ENCODE measurements at regions of chr3 and their contacts with region 1.

Region 1: GRCh38 chr3:50292159-50293078 is at the start of gene IFRD2:
- DNase-seq: peak in 8 of 9 experiments; percentile 92 to 98 (median 94)
- ATAC-seq: peak; percentile 98
- H3K4me3 ChIP-seq: peak within 1 kb of the TSS; percentile 87 to 88
- H3K4me3 Mint-ChIP-seq: peak within 1 kb of the TSS; percentile 89
- H3K27ac ChIP-seq: peak within 1 kb of the TSS; percentile 68 to 81
- H3K27ac Mint-ChIP-seq: peak within 1 kb of the TSS; percentile 96
- H3K4me1 ChIP-seq: peaks cover 13% of the 10 kb centered on the region
- H3K4me1 Mint-ChIP-seq: peaks cover 18% of the 10 kb centered on the region
- H3K27me3 ChIP-seq: no peaks in the 10 kb centered on the region
- H3K27me3 Mint-ChIP-seq: no peaks in the 10 kb centered on the region
- CTCF ChIP-seq: no peak
- total RNA-seq, gene IFRD2: 42.4 to 42.9 TPM

Region 2: DNA sequence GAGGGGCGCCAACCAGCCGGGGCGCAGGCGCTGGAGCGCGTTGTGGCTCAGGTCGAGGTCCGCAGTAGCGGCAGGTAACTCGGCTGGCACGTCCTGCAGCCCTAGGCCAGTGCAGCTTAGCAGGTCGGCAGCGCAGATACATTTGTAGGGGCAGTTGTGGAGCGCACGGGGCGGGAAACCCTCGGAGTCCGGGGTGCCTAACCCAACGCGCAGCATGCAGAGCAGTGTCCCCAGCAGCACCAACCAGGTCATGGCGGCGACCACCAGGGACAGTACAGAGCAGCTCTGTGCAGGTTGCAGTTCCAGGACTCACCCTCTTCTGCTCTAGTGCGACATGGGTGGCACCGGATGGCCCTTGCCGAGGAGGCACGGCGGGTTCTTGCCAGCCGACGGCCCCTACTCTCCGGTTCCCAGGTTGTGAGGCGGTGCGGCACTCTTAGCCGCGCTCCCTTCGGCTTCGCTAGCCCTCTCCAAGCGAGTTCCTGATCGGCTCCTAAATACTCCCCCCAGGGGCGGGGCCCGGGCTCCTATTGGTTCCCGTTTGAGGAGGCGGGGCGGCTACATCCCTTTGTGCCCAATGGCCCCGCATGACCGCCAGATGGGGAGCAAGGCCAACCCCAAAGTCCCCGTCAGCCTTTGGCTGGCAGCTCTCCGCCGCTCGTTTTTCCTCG is 573.1 kb before region 1 on chr3 and contains the start of gene AMIGO3:
- CTCF ChIA-PET with region 1: no interaction called
- POLR2A ChIA-PET with region 1: no interaction called
- intact Hi-C with region 1: no loop called
- DNase-seq: peak; percentile 78 to 93 (median 91)
- ATAC-seq: peak; percentile 78
- H3K4me3 ChIP-seq: peak within 1 kb of the TSS; percentile 76 to 94
- H3K4me3 Mint-ChIP-seq: peak within 1 kb of the TSS; percentile 92
- H3K27ac ChIP-seq: peak within 1 kb of the TSS; percentile 68 to 85
- H3K27ac Mint-ChIP-seq: peak within 1 kb of the TSS; percentile 92
- H3K4me1 ChIP-seq: peaks cover 25% of the 10 kb centered on the region
- H3K4me1 Mint-ChIP-seq: peaks cover 37% of the 10 kb centered on the region
- H3K27me3 ChIP-seq: no peaks in the 10 kb centered on the region
- H3K27me3 Mint-ChIP-seq: no peaks in the 10 kb centered on the region
- CTCF ChIP-seq: peak; percentile 94
- total RNA-seq, gene AMIGO3: 1.5 to 3.5 TPM

Region 3: GRCh38 chr3:49939858-49940666 is 352.4 kb before region 1 on chr3 and contains the start of gene RBM6:
- CTCF ChIA-PET with region 1: no interaction called
- POLR2A ChIA-PET with region 1: interaction called, 5 read pairs
- intact Hi-C with region 1: loop called (anchors 1 to 2 kb)
- DNase-seq: peak; percentile 82 to 97 (median 93)
- ATAC-seq: peak; percentile 98
- H3K4me3 ChIP-seq: peak within 1 kb of the TSS; percentile 78 to 98
- H3K4me3 Mint-ChIP-seq: peak within 1 kb of the TSS; percentile 99
- H3K27ac ChIP-seq: peak within 1 kb of the TSS; percentile 67 to 99
- H3K27ac Mint-ChIP-seq: peak within 1 kb of the TSS; percentile 98
- H3K4me1 ChIP-seq: peaks cover 15% of the 10 kb centered on the region
- H3K4me1 Mint-ChIP-seq: peaks cover 30% of the 10 kb centered on the region
- H3K27me3 ChIP-seq: no peaks in the 10 kb centered on the region
- H3K27me3 Mint-ChIP-seq: no peaks in the 10 kb centered on the region
- CTCF ChIP-seq: no peak
- total RNA-seq, gene RBM6: 92.1 to 95.0 TPM

Region 4: GRCh38 chr3:50112462-50112861 is 180.0 kb before region 1 on chr3:
- CTCF ChIA-PET with region 1: no interaction called
- POLR2A ChIA-PET with region 1: no interaction called
- intact Hi-C with region 1: no loop called
- DNase-seq: no peak
- ATAC-seq: no peak
- H3K4me3 ChIP-seq: no peak overlapping the region
- H3K4me3 Mint-ChIP-seq: no peak overlapping the region
- H3K27ac ChIP-seq: no peak overlapping the region
- H3K27ac Mint-ChIP-seq: no peak overlapping the region
- H3K4me1 ChIP-seq: no peaks in the 10 kb centered on the region
- H3K4me1 Mint-ChIP-seq: peaks cover 6% of the 10 kb centered on the region
- H3K27me3 ChIP-seq: no peaks in the 10 kb centered on the region
- H3K27me3 Mint-ChIP-seq: no peaks in the 10 kb centered on the region
- CTCF ChIP-seq: no peak

Region 5: GRCh38 chr3:50227390-50228183 is 64.8 kb before region 1 on chr3:
- CTCF ChIA-PET with region 1: interaction called, 3 read pairs
- POLR2A ChIA-PET with region 1: no interaction called
- intact Hi-C with region 1: loop called in 1 of 2 experiments (anchors 1 kb)
- DNase-seq: peak; percentile 76 to 95 (median 91)
- ATAC-seq: peak; percentile 81
- H3K4me3 ChIP-seq: peak overlapping the region; percentile 69 to 78
- H3K4me3 Mint-ChIP-seq: peak overlapping the region; percentile 91
- H3K27ac ChIP-seq: peak overlapping the region; percentile 56 to 66
- H3K27ac Mint-ChIP-seq: peak overlapping the region; percentile 91
- H3K4me1 ChIP-seq: peaks cover 17% of the 10 kb centered on the region
- H3K4me1 Mint-ChIP-seq: peaks cover 22% of the 10 kb centered on the region
- H3K27me3 ChIP-seq: no peaks in the 10 kb centered on the region
- H3K27me3 Mint-ChIP-seq: no peaks in the 10 kb centered on the region
- CTCF ChIP-seq: peak; percentile 73

Region 6: DNA sequence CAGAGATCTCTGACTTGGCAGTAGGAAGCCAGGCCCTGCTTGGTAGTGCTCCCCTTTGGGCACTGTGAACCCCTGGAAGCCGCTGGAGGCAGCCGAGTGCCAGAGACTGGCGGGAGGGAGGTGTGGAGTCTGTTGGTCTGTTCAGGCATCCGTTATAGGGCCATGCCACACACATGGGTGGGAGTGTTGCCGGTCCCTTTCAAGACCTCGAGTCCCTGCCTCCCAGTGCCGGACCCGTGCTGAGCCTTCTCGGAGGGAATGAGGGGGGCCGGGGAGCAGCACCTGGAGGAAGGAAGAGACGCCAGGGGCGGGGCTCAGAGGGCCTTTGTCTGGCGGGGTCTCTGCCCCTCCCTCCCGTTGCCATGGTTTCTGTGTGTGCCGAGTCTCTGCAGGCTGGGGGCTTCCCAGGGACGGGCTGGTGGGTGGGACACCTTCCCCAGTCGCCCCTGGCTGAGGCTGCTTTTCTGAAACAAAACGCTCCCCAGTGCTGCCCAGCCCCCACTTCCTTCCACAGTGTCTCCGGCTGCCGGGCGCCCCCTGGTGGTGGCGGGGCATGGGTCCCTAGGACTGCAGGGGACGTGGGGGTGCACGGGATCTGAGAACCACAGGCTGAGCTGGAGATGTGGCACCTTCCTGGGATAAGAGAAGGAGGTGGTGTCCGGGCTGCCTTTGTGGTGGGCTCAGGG is 46.4 kb before region 1 on chr3:
- CTCF ChIA-PET with region 1: interaction called, 6 read pairs
- POLR2A ChIA-PET with region 1: interaction called, 4 read pairs
- intact Hi-C with region 1: loop called in 1 of 2 experiments (anchors 1 kb)
- DNase-seq: peak; percentile 90 to 99 (median 95)
- ATAC-seq: peak; percentile 81
- H3K4me3 ChIP-seq: peak overlapping the region; percentile 40 to 55
- H3K4me3 Mint-ChIP-seq: peak overlapping the region; percentile 75
- H3K27ac ChIP-seq: peak overlapping the region; percentile 32 to 88
- H3K27ac Mint-ChIP-seq: peak overlapping the region; percentile 94
- H3K4me1 ChIP-seq: peaks cover 87% of the 10 kb centered on the region
- H3K4me1 Mint-ChIP-seq: peaks cover 76% of the 10 kb centered on the region
- H3K27me3 ChIP-seq: no peaks in the 10 kb centered on the region
- H3K27me3 Mint-ChIP-seq: no peaks in the 10 kb centered on the region
- CTCF ChIP-seq: peak; percentile 80

Region 7: DNA sequence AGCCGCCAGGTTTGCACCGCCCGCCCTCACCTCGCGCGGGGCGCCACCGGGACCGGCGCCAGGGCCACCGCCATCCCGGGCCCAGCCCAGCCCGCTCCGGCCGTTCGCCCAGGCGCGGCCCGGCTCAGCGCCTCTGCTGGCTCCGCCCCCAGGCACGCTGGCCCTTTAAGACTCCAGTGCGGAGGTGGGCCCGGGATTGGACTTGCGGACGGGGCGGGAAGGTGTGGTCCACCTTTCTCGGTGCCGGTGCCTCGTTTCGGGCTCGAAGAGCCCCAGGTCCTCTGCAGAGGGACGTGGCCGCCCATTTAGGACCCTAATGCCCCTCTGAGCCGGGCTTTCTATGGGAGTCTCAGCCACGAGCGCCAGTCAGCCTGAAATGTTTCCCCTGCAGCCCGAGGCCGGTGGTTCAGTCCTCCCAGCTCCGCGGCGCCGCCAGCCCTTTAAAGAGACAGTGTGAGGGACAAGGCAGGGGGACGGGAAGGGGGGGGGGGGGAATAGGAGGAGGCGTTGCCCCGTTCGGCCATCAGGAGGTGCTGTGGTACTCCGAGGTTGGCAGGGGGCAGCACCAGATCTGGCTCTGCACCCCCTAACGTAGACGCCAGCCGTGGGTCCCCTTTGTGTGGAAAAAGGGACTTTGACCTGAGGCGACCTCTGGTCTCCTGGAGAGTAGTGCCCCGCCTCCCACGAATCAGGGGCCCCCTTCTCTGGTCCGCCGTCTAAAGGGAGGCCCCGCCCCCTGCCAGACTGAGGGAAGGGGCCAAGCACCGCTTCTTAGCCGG is 29.1 kb after region 1 on chr3:
- CTCF ChIA-PET with region 1: interaction called, 4 read pairs
- POLR2A ChIA-PET with region 1: interaction called, 6 read pairs
- intact Hi-C with region 1: loop called in 1 of 2 experiments (anchors 1 kb)
- DNase-seq: peak; percentile 65 to 89 (median 82)
- ATAC-seq: peak; percentile 69
- H3K4me3 ChIP-seq: peak overlapping the region; percentile 71 to 96
- H3K4me3 Mint-ChIP-seq: peak overlapping the region; percentile 85
- H3K27ac ChIP-seq: peak overlapping the region; percentile 77 to 94
- H3K27ac Mint-ChIP-seq: peak overlapping the region; percentile 92
- H3K4me1 ChIP-seq: peaks cover 30% of the 10 kb centered on the region
- H3K4me1 Mint-ChIP-seq: peaks cover 41% of the 10 kb centered on the region
- H3K27me3 ChIP-seq: no peaks in the 10 kb centered on the region
- H3K27me3 Mint-ChIP-seq: no peaks in the 10 kb centered on the region
- CTCF ChIP-seq: peak; percentile 47

Region 8: GRCh38 chr3:50337191-50337841 is 44.9 kb after region 1 on chr3:
- CTCF ChIA-PET with region 1: no interaction called
- POLR2A ChIA-PET with region 1: interaction called, 17 read pairs
- intact Hi-C with region 1: loop called in 1 of 2 experiments (anchors 1 kb)
- DNase-seq: peak; percentile 74 to 98 (median 93)
- ATAC-seq: peak; percentile 81
- H3K4me3 ChIP-seq: peak overlapping the region; percentile 88 to 98
- H3K4me3 Mint-ChIP-seq: peak overlapping the region; percentile 98
- H3K27ac ChIP-seq: peak overlapping the region; percentile 91 to 93
- H3K27ac Mint-ChIP-seq: peak overlapping the region; percentile 96
- H3K4me1 ChIP-seq: peaks cover 77% of the 10 kb centered on the region
- H3K4me1 Mint-ChIP-seq: peaks cover 74% of the 10 kb centered on the region
- H3K27me3 ChIP-seq: no peaks in the 10 kb centered on the region
- H3K27me3 Mint-ChIP-seq: no peaks in the 10 kb centered on the region
- CTCF ChIP-seq: no peak

Region 9: GRCh38 chr3:50365080-50365841 is 72.8 kb after region 1 on chr3:
- CTCF ChIA-PET with region 1: no interaction called
- POLR2A ChIA-PET with region 1: no interaction called
- intact Hi-C with region 1: loop called in 1 of 2 experiments (anchors 1 kb)
- DNase-seq: peak; percentile 89 to 98 (median 94)
- ATAC-seq: peak; percentile 95
- H3K4me3 ChIP-seq: peak overlapping the region; percentile 68 to 81
- H3K4me3 Mint-ChIP-seq: peak overlapping the region; percentile 87
- H3K27ac ChIP-seq: peak overlapping the region; percentile 91 to 92
- H3K27ac Mint-ChIP-seq: peak overlapping the region; percentile 95
- H3K4me1 ChIP-seq: peaks cover 20% of the 10 kb centered on the region
- H3K4me1 Mint-ChIP-seq: peaks cover 35% of the 10 kb centered on the region
- H3K27me3 ChIP-seq: no peaks in the 10 kb centered on the region
- H3K27me3 Mint-ChIP-seq: no peaks in the 10 kb centered on the region
- CTCF ChIP-seq: no peak

Measured in CD8-positive, alpha-beta T cell (primary cell).